ENCODE measurements at regions of chr13 and their contacts with region 1.

Region 1: GRCh38 chr13:34011541-34012085 is 193.7 kb downstream of the RFC3 start:
- DNase-seq: peak; percentile 65 to 71
- H3K4me3 ChIP-seq: peak overlapping the region; percentile 23
- H3K4me3 Mint-ChIP-seq: peak overlapping the region; percentile 63
- H3K27ac Mint-ChIP-seq: peak overlapping the region; percentile 61
- H3K4me1 ChIP-seq: peaks cover 17% of the 10 kb centered on the region
- H3K4me1 Mint-ChIP-seq: peaks cover 40% of the 10 kb centered on the region
- H3K27me3 ChIP-seq: no peaks in the 10 kb centered on the region
- H3K27me3 Mint-ChIP-seq: no peaks in the 10 kb centered on the region
- CTCF ChIP-seq: no peak

Region 2: GRCh38 chr13:33940898-33941297 is 70.7 kb before region 1 on chr13:
- CTCF ChIA-PET with region 1: no interaction called
- POLR2A ChIA-PET with region 1: no interaction called
- intact Hi-C with region 1: no loop called
- DNase-seq: no peak
- H3K4me3 ChIP-seq: no peak overlapping the region
- H3K4me3 Mint-ChIP-seq: no peak overlapping the region
- H3K27ac Mint-ChIP-seq: no peak overlapping the region
- H3K4me1 ChIP-seq: no peaks in the 10 kb centered on the region
- H3K4me1 Mint-ChIP-seq: no peaks in the 10 kb centered on the region
- H3K27me3 ChIP-seq: no peaks in the 10 kb centered on the region
- H3K27me3 Mint-ChIP-seq: no peaks in the 10 kb centered on the region
- CTCF ChIP-seq: no peak

Region 3: GRCh38 chr13:34064456-34065205 is 53.0 kb after region 1 on chr13:
- CTCF ChIA-PET with region 1: no interaction called
- POLR2A ChIA-PET with region 1: no interaction called
- intact Hi-C with region 1: loop called (anchors 5 kb)
- DNase-seq: no peak
- H3K4me3 ChIP-seq: no peak overlapping the region
- H3K4me3 Mint-ChIP-seq: no peak overlapping the region
- H3K27ac Mint-ChIP-seq: peak overlapping the region; percentile 47
- H3K4me1 ChIP-seq: peaks cover 10% of the 10 kb centered on the region
- H3K4me1 Mint-ChIP-seq: peaks cover 24% of the 10 kb centered on the region
- H3K27me3 ChIP-seq: no peaks in the 10 kb centered on the region
- H3K27me3 Mint-ChIP-seq: no peaks in the 10 kb centered on the region
- CTCF ChIP-seq: no peak

Region 4: GRCh38 chr13:34137200-34137599 is 125.6 kb after region 1 on chr13:
- CTCF ChIA-PET with region 1: no interaction called
- POLR2A ChIA-PET with region 1: no interaction called
- intact Hi-C with region 1: no loop called
- DNase-seq: no peak
- H3K4me3 ChIP-seq: no peak overlapping the region
- H3K4me3 Mint-ChIP-seq: no peak overlapping the region
- H3K27ac Mint-ChIP-seq: no peak overlapping the region
- H3K4me1 ChIP-seq: no peaks in the 10 kb centered on the region
- H3K4me1 Mint-ChIP-seq: no peaks in the 10 kb centered on the region
- H3K27me3 ChIP-seq: no peaks in the 10 kb centered on the region
- H3K27me3 Mint-ChIP-seq: peaks cover 3% of the 10 kb centered on the region
- CTCF ChIP-seq: no peak